Right ventricle myocardium inferior (tissue), 1 donor: ENCODE measurements at regions of chr12 and their contacts with region 1.

Region 1: GRCh38 chr12:51895501-51896041 is 7.7 kb downstream of the ANKRD33 start:
- DNase-seq: peak; percentile 65
- ATAC-seq: no peak

Region 2: DNA sequence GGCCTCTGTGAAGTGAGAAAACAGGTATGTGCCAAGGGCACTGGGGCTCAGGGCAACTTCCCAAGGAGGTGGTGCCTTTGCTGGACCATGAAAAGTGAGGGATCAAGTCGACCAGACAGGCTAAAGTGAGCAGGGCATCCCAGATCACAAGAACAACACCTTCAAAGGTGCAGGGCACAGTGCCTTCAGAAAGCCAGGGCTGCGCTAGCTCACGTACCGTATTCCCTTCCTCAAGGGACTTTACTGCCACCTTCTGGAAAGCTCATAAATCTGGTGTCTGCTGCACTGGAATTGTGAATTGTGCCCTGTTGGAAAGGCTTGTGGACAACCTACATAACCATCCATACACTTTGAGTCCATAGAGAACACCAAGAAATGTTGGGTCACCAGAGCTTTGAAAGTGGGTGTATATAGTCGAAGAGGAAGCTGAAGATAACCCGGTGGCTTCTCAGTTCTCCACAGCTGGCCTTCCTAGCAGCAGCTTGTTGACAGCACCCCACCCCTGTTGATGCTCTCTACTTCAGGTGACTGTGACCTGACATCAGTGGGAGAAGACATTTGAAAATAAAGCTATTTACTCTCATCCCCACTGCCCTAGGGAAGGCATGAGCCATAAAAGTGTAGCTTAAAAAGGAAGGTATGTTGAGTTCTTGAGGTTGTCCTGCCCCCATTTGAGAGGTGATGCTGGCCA is 71.6 kb before region 1 on chr12:
- intact Hi-C with region 1: no loop called
- DNase-seq: no peak
- ATAC-seq: no peak

Region 3: GRCh38 chr12:51923501-51924271 is 28.1 kb after region 1 on chr12:
- intact Hi-C with region 1: loop called (anchors 1 kb)
- DNase-seq: peak; percentile 91
- ATAC-seq: peak; percentile 81

Region 4: GRCh38 chr12:51980051-51980808 is 84.7 kb after region 1 on chr12:
- intact Hi-C with region 1: loop called (anchors 2 kb)
- DNase-seq: peak; percentile 91
- ATAC-seq: peak; percentile 88